Thyroid gland (tissue), 4 donors: ENCODE measurements at regions of chr6 and their contacts with region 1.

Region 1: GRCh38 chr6:34414999-34415858 is 10.6 kb downstream of the RPS10 start:
- DNase-seq: peak; percentile 68 to 69
- H3K4me3 ChIP-seq: no peak overlapping the region
- H3K27ac ChIP-seq: peak overlapping the region; percentile 29 to 75 (median 57)
- H3K4me1 ChIP-seq: peaks cover 0 to 14% of the 10 kb centered on the region in 2 donors
- H3K27me3 ChIP-seq: no peaks in the 10 kb centered on the region
- CTCF ChIP-seq: peak in 5 of 6 experiments; percentile 25 to 97 (median 88)
- POLR2A ChIP-seq: no peak

Region 2: GRCh38 chr6:33983105-33983716 is 432.0 kb before region 1 on chr6:
- intact Hi-C with region 1: no loop called
- DNase-seq: peak; percentile 17 to 21
- H3K4me3 ChIP-seq: no peak overlapping the region
- H3K27ac ChIP-seq: no peak overlapping the region
- H3K4me1 ChIP-seq: no peaks in the 10 kb centered on the region
- H3K27me3 ChIP-seq: no peaks in the 10 kb centered on the region
- CTCF ChIP-seq: peak in 1 of 6 experiments; percentile 7
- POLR2A ChIP-seq: no peak

Region 3: GRCh38 chr6:34196126-34196830 is 219.0 kb before region 1 on chr6:
- intact Hi-C with region 1: loop called (anchors 5 kb)
- DNase-seq: peak; percentile 88 to 89
- H3K4me3 ChIP-seq: peak overlapping the region; percentile 21 to 48 (median 31)
- H3K27ac ChIP-seq: no peak overlapping the region
- H3K4me1 ChIP-seq: peaks cover 2 to 4% of the 10 kb centered on the region in 2 donors
- H3K27me3 ChIP-seq: no peaks in the 10 kb centered on the region
- CTCF ChIP-seq: peak; percentile 78 to 98 (median 95)
- POLR2A ChIP-seq: no peak